Dendritic cell treated with granulocyte-macrophage colony-stimulating factor and Interleukin-4, amounts not matched to agents 40 ng/mL and 50 ng/mL, for 4 days (primary cell): ENCODE measurements at regions of chr4 and their contacts with region 1.

Region 1: GRCh38 chr4:88104902-88105610 is 53.4 kb downstream of the ABCG2 start:
- H3K4me3 Mint-ChIP-seq: no peak overlapping the region
- H3K27ac Mint-ChIP-seq: peak overlapping the region; percentile 66
- H3K4me1 Mint-ChIP-seq: peaks cover 41% of the 10 kb centered on the region
- H3K27me3 Mint-ChIP-seq: no peaks in the 10 kb centered on the region

Region 2: GRCh38 chr4:88177961-88178625 is 73.0 kb after region 1 on chr4:
- intact Hi-C with region 1: loop called (anchors 5 kb)
- H3K4me3 Mint-ChIP-seq: no peak overlapping the region
- H3K27ac Mint-ChIP-seq: peak overlapping the region; percentile 93
- H3K4me1 Mint-ChIP-seq: peaks cover 25% of the 10 kb centered on the region
- H3K27me3 Mint-ChIP-seq: no peaks in the 10 kb centered on the region